ENCODE measurements at regions of chr17 and their contacts with region 1.

Region 1: GRCh38 chr17:18183334-18184142 is at the start of gene ALKBH5:
- DNase-seq: peak; percentile 99

Region 2: DNA sequence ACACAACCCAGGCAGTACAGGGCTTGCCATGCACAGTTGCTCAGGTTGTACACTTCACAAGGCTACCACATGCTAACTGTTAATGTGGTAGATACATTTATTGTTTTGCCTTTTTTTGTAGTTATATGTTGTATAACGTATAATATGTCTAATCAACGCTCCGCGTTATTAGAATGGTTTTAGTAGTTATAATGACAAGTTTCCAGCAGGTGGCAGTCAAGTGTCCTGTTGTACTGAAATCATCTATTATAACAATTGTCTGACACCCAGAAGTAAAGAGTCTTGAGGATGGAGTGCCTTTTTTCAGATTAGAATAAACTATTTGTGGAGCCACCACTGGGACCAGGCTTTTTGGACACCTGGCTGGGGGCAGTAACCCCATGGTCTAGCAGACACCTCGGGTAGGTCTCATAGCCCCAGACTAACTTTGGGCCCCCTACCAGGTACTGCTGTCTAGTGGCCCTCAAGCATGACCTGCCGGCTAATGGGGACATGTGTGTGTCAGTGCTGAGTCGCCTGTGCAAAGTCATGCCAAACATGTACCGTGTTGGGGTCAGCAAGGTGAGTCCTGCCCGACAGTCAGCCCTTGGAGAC is 42.2 kb before region 1 on chr17:
- CTCF ChIA-PET with region 1: interaction called, 11 read pairs
- POLR2A ChIA-PET with region 1: interaction called, 14 read pairs
- DNase-seq: peak; percentile 55

Region 3: GRCh38 chr17:18153749-18154161 is 29.8 kb before region 1 on chr17:
- CTCF ChIA-PET with region 1: interaction called, 3 read pairs
- POLR2A ChIA-PET with region 1: interaction called, 44 read pairs
- DNase-seq: peak; percentile 86

Region 4: GRCh38 chr17:18166894-18167293 is 16.6 kb before region 1 on chr17:
- CTCF ChIA-PET with region 1: interaction called, 3 read pairs
- POLR2A ChIA-PET with region 1: interaction called, 57 read pairs
- DNase-seq: peak; percentile 28

Region 5: GRCh38 chr17:18197535-18198194 is 14.1 kb after region 1 on chr17:
- CTCF ChIA-PET with region 1: no interaction called
- POLR2A ChIA-PET with region 1: interaction called, 27 read pairs
- DNase-seq: no peak

Region 6: DNA sequence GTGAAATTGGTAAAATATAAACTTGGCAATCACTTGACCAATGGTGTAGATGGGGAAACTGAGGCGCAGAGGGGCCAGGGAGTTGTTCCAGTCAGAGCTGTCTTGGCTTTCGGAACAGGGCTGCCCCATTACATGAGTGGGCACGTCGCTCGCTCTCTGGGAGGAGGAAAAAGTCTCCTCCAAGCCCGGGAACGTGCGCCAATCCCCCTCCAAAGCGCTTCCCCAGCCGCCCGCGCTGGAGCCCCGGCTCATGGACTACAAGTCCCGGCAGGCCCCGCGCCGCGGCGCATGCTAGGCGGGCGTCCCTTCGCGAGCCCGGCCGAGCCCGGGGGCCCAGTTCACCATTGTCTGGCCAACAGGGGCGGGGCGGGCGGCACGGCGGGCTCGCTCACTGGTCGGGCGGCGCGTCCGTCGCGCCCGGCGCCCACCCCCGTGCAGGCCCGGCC is 41.6 kb after region 1 on chr17:
- CTCF ChIA-PET with region 1: no interaction called
- POLR2A ChIA-PET with region 1: interaction called, 13 read pairs
- DNase-seq: peak; percentile 98

Region 7: DNA sequence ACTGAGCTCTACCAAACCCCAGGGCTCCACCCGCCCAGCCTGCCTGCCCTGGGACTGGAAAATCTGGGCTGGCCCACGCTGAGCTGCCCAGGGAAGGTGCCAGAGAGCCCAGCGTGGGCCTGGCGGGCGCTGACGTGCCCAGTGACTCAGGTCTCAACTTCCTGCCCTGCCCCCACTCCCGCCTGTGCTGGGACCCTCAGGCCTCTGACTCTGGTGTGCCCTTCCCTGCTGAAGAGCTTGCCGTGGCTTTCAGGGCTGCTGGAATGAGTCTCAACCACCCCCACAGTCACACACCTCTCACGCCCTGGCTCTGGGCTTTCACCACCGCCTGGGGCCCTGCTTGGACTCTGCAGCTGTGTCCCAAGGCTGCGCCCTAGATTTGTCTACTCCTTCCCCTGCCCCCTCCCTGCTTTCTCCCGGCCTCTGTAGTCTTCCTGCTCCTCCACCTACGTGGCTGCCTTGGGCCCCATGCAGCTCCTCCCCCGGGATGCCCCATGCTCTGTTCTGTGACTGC is 52.3 kb after region 1 on chr17:
- CTCF ChIA-PET with region 1: no interaction called
- POLR2A ChIA-PET with region 1: no interaction called
- DNase-seq: no peak

Region 8: GRCh38 chr17:18353541-18353940 is 170.0 kb after region 1 on chr17:
- CTCF ChIA-PET with region 1: no interaction called
- POLR2A ChIA-PET with region 1: no interaction called
- DNase-seq: no peak

Measured in HEK293T (cell line).